ENCODE measurements at regions of chr11 and their contacts with region 1.

Region 1: GRCh38 chr11:65117216-65118096 is at the start of gene ZNHIT2:
- DNase-seq: peak; percentile 96 to 100
- H3K4me3 ChIP-seq: peak within 1 kb of the TSS; percentile 87 to 97
- H3K27ac ChIP-seq: peak within 1 kb of the TSS; percentile 71 to 93
- H3K4me1 ChIP-seq: peaks cover 27 to 33% of the 10 kb centered on the region in 2 donors
- H3K27me3 ChIP-seq: no peaks in the 10 kb centered on the region
- CTCF ChIP-seq: peak; percentile 92 to 97 (median 93)
- total RNA-seq, gene ZNHIT2: 35.3 TPM

Region 2: GRCh38 chr11:64909653-64910343 is 207.7 kb before region 1 on chr11:
- intact Hi-C with region 1: no loop called
- DNase-seq: no peak
- H3K4me3 ChIP-seq: no peak overlapping the region
- H3K27ac ChIP-seq: no peak overlapping the region
- H3K4me1 ChIP-seq: no peaks in the 10 kb centered on the region
- H3K27me3 ChIP-seq: no peaks in the 10 kb centered on the region
- CTCF ChIP-seq: no peak

Region 3: DNA sequence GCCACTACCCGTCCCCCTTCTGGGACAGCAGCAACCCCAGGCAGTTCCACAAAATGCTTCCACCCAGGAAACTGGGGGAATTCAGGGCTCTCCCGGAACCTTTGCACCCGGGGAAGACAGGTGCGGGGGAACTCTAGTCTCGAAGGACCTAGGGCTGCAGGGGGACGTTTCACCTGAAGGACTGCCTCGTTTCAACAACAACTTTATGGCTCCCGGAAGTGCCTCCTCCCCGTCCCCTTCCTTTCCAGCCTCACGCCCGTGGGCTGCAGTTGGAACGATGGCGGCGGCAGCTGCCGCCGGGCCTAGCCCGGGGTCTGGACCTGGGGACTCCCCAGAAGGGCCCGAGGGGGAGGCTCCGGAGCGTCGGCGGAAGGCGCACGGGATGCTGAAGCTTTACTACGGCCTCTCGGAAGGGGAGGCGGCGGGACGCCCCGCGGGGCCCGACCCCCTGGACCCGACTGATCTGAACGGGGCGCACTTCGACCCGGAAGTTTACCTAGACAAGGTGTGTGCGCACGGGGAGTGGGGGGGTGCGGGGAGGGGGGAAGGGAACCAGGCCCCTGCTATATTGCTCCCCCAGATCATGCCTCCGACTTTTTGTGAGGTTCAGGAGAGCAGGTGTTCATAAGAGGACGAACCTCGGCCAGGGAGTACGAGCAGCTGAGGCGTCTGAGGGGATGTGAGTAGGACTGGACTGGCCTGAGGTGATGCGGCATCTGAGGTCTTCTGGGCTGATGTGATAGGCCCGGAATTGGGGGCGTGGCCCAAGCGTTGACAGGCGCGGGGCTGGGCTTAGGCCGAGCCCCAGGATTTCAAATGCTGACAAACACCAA is 21.3 kb before region 1 on chr11 and contains the start of gene VPS51:
- intact Hi-C with region 1: loop called (anchors 1 kb)
- DNase-seq: peak; percentile 66 to 94
- H3K4me3 ChIP-seq: peak within 1 kb of the TSS; percentile 73 to 80
- H3K27ac ChIP-seq: peak within 1 kb of the TSS; percentile 86 to 95
- H3K4me1 ChIP-seq: peaks cover 3 to 15% of the 10 kb centered on the region in 2 donors
- H3K27me3 ChIP-seq: no peaks in the 10 kb centered on the region
- CTCF ChIP-seq: peak in 1 of 3 experiments; percentile 20
- total RNA-seq, gene VPS51: 226 TPM

Region 4: DNA sequence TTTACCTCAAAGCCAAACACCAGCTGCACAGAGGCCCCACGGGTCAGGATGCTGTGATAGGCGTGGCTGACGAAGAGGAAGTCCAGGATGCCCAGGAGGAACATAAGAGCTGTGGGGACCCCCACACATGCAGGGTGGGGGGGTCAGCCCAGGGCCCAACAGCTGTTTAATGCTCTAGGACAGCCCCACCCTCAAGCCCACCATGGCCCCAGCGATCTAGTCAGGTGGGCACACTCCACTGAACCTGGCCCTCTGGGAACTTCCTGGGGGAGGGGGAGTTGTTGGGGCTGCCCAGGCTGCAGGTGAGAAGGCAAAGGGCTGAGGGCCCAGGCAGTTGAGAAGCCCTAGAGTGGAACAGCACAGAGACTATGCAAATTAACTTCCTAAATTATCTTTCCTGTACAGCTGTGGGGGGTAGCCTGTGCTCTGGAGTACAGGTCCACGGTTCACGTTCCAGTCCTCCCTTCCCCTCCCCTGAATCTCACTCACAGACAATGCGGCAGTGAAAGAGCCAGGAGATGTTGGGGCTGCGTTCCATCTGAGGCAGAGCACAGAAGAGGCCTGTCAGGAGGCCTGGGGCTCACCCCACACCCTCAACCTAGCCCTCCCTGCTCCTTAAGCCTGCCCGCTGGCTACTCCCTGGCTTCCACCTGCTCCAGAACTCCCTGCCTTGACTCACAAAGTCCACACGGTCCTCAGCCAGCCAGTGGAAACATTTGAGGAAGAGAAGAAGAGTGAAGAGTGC is 15.0 kb after region 1 on chr11:
- intact Hi-C with region 1: no loop called
- DNase-seq: peak in 1 of 2 donors; percentile 60
- H3K4me3 ChIP-seq: peak overlapping the region in 1 of 2 donors; percentile 99
- H3K27ac ChIP-seq: peak overlapping the region; percentile 95 to 99
- H3K4me1 ChIP-seq: peaks cover 11 to 24% of the 10 kb centered on the region in 2 donors
- H3K27me3 ChIP-seq: no peaks in the 10 kb centered on the region
- CTCF ChIP-seq: no peak